Mucosa of descending colon (tissue), 3 donors: ENCODE measurements at regions of chr18 and their contacts with region 1.

Region 1: DNA sequence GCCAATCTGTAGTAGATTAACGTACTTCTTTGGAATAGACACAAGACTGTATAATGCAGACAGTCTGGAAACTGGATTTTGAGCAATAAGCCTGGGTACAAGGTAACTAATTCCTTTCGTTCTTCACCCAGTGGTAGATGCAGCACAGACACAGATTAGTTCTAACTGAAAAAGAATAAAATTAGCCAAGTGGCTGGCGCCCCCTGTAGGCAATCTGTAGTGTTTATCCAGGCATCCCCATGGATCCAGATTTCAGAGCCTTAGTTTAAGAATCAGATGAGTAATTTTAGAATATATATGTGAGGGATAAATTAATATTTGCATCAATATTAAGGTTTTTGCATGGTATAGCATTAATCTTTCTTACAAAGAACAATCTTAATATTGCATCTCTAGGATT is 563.9 kb downstream of the DCC start:
- DNase-seq: peak in 2 of 3 donors; percentile 59 to 83
- ATAC-seq: peak; percentile 81
- H3K4me3 ChIP-seq: no peak overlapping the region
- H3K4me1 ChIP-seq: no peaks in the 10 kb centered on the region
- CTCF ChIP-seq: peak; percentile 52

Region 2: DNA sequence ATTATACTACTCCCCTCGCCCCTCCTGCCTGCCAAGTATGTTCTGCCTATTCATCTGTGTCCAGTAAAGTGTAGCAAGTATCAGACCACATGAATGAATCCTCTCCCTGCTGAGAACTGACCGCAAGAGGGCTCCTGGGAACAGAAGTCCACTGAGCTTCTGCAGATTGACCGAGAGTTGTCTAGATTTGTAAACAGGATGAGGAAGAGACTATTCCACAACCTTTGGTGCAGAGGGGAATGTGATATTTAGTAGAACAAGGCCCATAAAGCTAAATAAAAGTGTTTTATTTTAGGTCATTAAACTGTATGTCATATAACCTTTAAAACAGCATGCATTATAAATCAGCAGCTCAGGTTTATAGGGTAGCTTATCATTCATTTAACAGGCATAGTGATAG is 186.9 kb before region 1 on chr18:
- intact Hi-C with region 1: loop called in 1 of 2 experiments (anchors 5 kb)
- DNase-seq: peak in 2 of 3 donors; percentile 61 to 87
- ATAC-seq: peak; percentile 97
- H3K4me3 ChIP-seq: no peak overlapping the region
- H3K4me1 ChIP-seq: peaks cover 14% of the 10 kb centered on the region
- CTCF ChIP-seq: peak; percentile 46